Mammary epithelial cell (primary cell): ENCODE measurements at regions of chr9 and their contacts with region 1.

Region 1: DNA sequence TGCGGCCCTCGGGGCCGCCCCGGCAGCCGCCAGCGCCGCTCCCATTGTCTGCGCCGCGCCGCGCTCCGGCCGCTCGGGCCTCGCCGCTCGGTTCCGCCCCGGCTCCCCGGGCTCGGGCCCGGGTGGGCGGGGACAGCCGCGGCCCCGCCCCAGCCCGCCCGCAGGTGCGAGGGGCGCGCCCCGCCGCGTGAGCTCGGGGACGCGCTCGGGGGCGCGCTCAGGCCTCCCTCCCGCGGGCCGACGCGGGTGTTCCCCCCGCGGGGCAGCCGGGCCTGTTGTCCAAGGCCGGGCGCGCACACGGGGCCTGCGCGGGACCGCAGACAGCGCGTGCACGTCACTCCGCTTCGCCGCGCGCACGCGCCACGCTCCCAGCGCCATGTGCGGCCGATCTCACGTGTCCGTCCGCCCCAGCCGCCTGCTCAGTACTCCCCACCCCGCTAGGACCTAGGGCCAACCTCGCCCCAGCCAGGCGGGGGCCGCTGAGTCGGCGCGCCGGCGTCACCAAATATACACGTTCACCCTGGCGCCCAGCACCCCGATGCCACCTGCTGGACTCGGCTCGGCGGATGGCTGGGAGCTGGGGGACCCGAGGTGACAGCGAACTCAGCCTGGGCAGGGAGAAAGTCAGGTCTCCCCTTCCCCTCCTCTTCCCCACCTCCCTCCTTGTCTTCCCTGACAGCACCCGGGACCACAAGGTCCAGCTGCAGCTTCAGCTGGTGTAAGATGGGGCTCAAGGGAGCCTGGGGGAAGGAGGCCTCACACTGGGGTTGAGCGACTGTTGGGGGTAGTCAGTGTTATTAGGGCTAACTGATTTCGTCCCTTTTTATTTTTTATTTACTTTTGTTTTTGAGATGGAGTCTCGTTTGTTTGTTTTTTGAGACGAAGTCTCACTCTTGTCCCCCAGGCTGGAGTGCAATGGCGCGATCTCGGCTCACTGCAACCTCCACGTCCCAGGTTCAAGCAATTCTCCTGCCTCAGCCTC is 14.3 kb downstream of the GBGT1 start:
- DNase-seq: peak; percentile 92
- H3K4me3 ChIP-seq: peak overlapping the region; percentile 12 to 98 (median 86)
- H3K27ac ChIP-seq: peak overlapping the region; percentile 88
- H3K4me1 ChIP-seq: peaks cover 16% of the 10 kb centered on the region
- H3K27me3 ChIP-seq: no peaks in the 10 kb centered on the region
- CTCF ChIP-seq: peak in 1 of 2 donors; percentile 50

Region 2: DNA sequence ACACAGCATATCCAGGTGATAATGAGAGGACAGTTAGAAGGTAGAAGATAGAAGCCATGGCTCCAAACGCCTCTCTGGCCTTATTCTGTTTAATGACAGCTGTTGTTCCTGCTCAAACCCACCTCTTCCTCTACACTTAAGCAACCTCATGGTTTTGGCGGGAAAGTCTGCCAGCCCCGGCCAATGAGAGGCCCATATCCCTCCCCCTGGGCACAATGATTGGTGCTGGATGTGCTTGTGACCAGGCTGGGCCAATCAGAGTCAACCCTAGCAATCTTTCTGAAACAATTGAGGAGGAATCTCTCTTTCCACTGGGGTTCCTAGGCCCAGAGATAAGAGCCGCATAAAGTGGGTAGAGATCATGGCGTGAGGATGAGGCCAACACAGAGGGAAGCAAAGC is 175.7 kb before region 1 on chr9:
- CTCF ChIA-PET with region 1: no interaction called
- dilution Hi-C with region 1: no loop called
- in situ Hi-C with region 1: no loop called
- intact Hi-C with region 1: loop called (anchors 1 kb)
- DNase-seq: no peak
- H3K4me3 ChIP-seq: no peak overlapping the region
- H3K27ac ChIP-seq: no peak overlapping the region
- H3K4me1 ChIP-seq: peaks cover 4% of the 10 kb centered on the region
- H3K27me3 ChIP-seq: peaks cover 2% of the 10 kb centered on the region
- CTCF ChIP-seq: no peak

Region 3: GRCh38 chr9:133035669-133036068 is 113.7 kb before region 1 on chr9:
- CTCF ChIA-PET with region 1: interaction called, 14 read pairs
- dilution Hi-C with region 1: no loop called
- in situ Hi-C with region 1: loop called (anchors 10 kb)
- intact Hi-C with region 1: no loop called
- DNase-seq: peak; percentile 44
- H3K4me3 ChIP-seq: no peak overlapping the region
- H3K27ac ChIP-seq: no peak overlapping the region
- H3K4me1 ChIP-seq: peaks cover 24% of the 10 kb centered on the region
- H3K27me3 ChIP-seq: no peaks in the 10 kb centered on the region
- CTCF ChIP-seq: no peak

Region 4: DNA sequence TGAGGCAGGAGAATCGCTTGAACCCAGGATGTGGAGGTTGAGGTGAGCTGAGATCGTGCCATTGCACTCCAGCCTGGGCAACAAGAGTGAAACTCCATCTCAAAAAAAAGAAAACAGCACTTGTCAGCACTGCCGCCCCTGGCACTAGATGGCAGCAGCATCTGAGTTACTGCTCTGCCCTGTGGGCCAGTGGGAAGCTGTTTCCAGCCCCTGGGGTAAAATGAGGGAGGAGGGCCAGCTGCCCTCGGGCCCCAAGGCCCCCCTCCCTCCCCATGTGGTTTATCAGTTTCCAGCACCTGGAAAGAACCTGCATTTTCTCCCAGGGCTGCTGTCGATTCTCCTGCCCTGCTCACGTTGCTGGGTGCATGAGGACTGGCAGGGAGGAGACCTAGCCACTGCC is 100.8 kb before region 1 on chr9:
- CTCF ChIA-PET with region 1: no interaction called
- dilution Hi-C with region 1: no loop called
- in situ Hi-C with region 1: loop called (anchors 10 kb)
- intact Hi-C with region 1: loop called (anchors 1 kb)
- DNase-seq: no peak
- H3K4me3 ChIP-seq: no peak overlapping the region
- H3K27ac ChIP-seq: no peak overlapping the region
- H3K4me1 ChIP-seq: no peaks in the 10 kb centered on the region
- H3K27me3 ChIP-seq: no peaks in the 10 kb centered on the region
- CTCF ChIP-seq: peak; percentile 32 to 64

Region 5: GRCh38 chr9:133133681-133134418 is 15.6 kb before region 1 on chr9:
- CTCF ChIA-PET with region 1: interaction called, 8 read pairs
- dilution Hi-C with region 1: no loop called
- in situ Hi-C with region 1: no loop called
- intact Hi-C with region 1: loop called (anchors 1 kb)
- DNase-seq: peak; percentile 98
- H3K4me3 ChIP-seq: no peak overlapping the region
- H3K27ac ChIP-seq: peak overlapping the region; percentile 85
- H3K4me1 ChIP-seq: peaks cover 34% of the 10 kb centered on the region
- H3K27me3 ChIP-seq: no peaks in the 10 kb centered on the region
- CTCF ChIP-seq: no peak